ENCODE measurements at regions of chr22 and their contacts with region 1.

Region 1: DNA sequence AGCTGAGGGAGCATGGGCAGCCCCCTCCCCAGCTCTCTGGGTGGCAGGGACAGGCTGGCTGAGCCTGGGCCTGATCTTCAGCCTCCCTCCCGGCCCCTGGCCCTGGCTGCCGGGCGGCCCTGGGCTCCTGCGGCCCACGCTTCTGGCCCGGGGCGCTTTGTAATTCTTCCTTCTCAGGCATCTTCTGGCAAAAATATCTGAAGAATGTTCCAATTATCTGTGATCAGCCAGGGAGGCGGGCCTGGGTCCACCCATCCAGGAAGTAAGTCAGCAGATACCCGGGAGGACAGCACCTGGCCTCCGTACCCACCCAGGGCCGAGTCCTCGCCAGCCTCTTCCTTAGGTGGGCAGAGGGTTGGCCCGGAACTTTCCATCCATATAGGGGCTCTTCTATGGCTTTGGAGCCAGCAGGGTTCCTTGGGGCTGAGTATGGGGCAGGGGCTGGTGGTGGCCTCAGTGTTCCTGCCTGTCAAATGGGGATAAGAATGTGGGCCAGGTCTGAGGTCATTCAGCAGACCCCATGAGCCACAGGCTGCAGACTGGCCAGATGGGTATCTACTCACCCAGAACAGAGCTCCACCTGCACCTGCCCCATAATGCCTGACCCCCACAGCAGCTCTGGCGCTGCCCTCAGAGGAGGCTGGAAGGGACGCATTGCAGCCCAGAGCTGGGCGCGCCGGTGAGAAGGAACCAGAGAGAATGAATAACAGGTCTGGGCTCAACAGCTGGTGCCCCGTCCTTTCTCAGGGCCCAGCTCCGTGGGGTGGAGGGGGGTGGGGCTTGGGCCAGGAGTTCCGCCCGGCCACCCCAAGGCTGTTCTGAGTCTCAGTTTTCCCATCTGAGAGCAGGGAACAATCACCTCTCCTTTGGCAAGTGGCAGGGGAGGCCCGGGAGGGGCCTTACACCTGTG is 16.2 kb downstream of the WNT7B start:
- DNase-seq: no peak
- H3K4me3 ChIP-seq: no peak overlapping the region
- H3K27ac ChIP-seq: no peak overlapping the region
- H3K4me1 ChIP-seq: no peaks in the 10 kb centered on the region
- H3K27me3 ChIP-seq: no peaks in the 10 kb centered on the region
- CTCF ChIP-seq: no peak
- POLR2A ChIP-seq: no peak

Region 2: GRCh38 chr22:45842291-45842991 is 118.3 kb before region 1 on chr22:
- CTCF ChIA-PET with region 1: no interaction called
- POLR2A ChIA-PET with region 1: no interaction called
- dilution Hi-C with region 1: no loop called
- intact Hi-C with region 1: no loop called
- DNase-seq: no peak
- H3K4me3 ChIP-seq: no peak overlapping the region
- H3K27ac ChIP-seq: no peak overlapping the region
- H3K4me1 ChIP-seq: no peaks in the 10 kb centered on the region
- H3K27me3 ChIP-seq: no peaks in the 10 kb centered on the region
- CTCF ChIP-seq: no peak
- POLR2A ChIP-seq: no peak

Region 3: DNA sequence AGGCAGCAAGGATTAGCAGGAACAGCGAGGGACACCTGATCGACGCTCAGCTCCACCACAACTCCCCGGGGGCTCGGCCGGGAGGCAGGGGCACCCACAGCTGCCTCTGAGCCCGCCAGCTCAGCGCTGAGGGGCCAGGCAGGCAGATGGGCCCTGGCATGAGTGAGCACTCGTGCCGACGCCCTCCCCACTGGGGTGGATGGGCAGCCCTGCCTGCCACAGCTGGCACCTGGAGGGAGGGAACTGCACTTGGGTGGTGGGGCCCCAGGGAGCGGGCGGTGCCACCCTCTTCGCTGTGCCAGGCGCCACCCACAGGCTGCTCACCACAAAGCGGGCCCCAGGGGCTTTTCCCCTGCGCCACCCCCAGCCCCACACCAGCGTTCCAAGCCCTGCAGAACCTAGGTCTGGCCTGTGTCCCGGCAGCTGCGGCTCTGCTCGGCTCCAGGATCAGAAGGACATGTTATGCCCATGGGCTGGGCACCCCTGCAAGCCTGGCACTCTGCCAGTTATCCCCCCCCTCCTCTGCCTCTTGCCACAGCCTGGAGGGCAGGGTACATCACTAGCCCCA is 12.6 kb before region 1 on chr22:
- CTCF ChIA-PET with region 1: interaction called, 5 read pairs
- POLR2A ChIA-PET with region 1: interaction called, 15 read pairs
- dilution Hi-C with region 1: no loop called
- intact Hi-C with region 1: no loop called
- DNase-seq: no peak
- H3K4me3 ChIP-seq: no peak overlapping the region
- H3K27ac ChIP-seq: no peak overlapping the region
- H3K4me1 ChIP-seq: no peaks in the 10 kb centered on the region
- H3K27me3 ChIP-seq: no peaks in the 10 kb centered on the region
- CTCF ChIP-seq: no peak
- POLR2A ChIP-seq: no peak

Region 4: GRCh38 chr22:45994491-45995404 is 34.0 kb after region 1 on chr22:
- CTCF ChIA-PET with region 1: no interaction called
- POLR2A ChIA-PET with region 1: no interaction called
- dilution Hi-C with region 1: no loop called
- intact Hi-C with region 1: no loop called
- DNase-seq: peak; percentile 55
- H3K4me3 ChIP-seq: no peak overlapping the region
- H3K27ac ChIP-seq: no peak overlapping the region
- H3K4me1 ChIP-seq: peaks cover 31% of the 10 kb centered on the region
- H3K27me3 ChIP-seq: no peaks in the 10 kb centered on the region
- CTCF ChIP-seq: peak; percentile 91 to 95
- POLR2A ChIP-seq: no peak

Measured in endothelial cell of umbilical vein (primary cell).